Head of caudate nucleus (tissue), 42 donors: ENCODE measurements at regions of chr5 and their contacts with region 1.

Region 1: DNA sequence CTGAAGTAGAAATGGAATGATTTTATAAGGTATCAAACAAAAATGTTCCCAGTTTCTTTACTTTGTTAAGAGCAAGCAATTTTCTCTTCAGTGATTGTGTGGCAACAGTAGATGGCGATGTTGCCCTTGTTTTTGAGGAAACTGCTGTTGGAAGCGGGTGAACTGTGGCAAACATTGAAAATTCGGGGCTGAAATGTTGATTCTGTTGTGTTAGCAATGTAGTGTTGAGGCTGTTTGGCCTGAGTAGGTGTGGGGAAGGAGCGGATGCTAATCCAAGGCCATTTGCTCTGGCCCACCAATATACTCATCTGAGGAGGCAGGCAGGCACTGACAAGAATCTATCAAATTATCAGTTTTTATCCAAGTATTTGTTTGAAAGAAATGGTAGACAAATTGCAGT is 129.8 kb downstream of the SLC12A2 start:
- DNase-seq: peak in 38 of 42 donors; percentile 18 to 85 (median 68)

Region 2: DNA sequence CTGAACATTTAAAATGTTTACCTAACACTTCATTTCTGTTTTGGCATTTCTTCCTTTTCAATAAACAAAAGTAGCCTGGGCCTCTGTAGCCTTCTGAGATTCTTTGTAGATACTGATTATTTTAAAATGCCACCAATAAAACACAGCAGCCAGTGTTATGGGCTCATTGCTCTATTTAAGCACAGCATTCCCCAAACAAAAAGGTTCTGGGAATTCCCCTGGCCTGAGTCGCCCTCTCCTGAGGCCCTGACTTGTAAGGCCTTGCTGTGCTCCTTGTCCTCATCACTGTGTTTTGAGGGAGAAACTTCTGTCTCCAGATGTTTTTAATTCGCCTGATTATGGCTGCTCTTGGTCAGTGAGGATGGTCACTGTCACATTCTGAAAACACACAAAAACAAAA is 597.4 kb before region 1 on chr5:
- intact Hi-C with region 1: no loop called
- DNase-seq: no peak

Region 3: GRCh38 chr5:128163991-128164390 is 49.3 kb before region 1 on chr5:
- intact Hi-C with region 1: no loop called
- DNase-seq: no peak

Region 4: GRCh38 chr5:128290152-128290864 is 77.0 kb after region 1 on chr5:
- intact Hi-C with region 1: no loop called
- DNase-seq: no peak

Region 5: GRCh38 chr5:128498844-128499455 is 285.6 kb after region 1 on chr5:
- intact Hi-C with region 1: loop called (anchors 10 kb)
- DNase-seq: peak in 6 of 42 donors; percentile 5 to 47 (median 14)

Region 6: GRCh38 chr5:128844354-128844923 is 631.1 kb after region 1 on chr5:
- intact Hi-C with region 1: loop called (anchors 5 kb)
- DNase-seq: no peak